Activated CD8-positive, alpha-beta T cell treated with anti-CD3 and anti-CD28 coated beads for 36 hours (primary cell): ENCODE measurements at regions of chr3 and their contacts with region 1.

Region 1: GRCh38 chr3:146110161-146110560 is 50.8 kb downstream of the PLOD2 start:
- DNase-seq: no peak
- ATAC-seq: no peak
- H3K4me3 Mint-ChIP-seq: no peak overlapping the region
- H3K27ac Mint-ChIP-seq: no peak overlapping the region
- H3K4me1 Mint-ChIP-seq: no peaks in the 10 kb centered on the region
- H3K27me3 Mint-ChIP-seq: no peaks in the 10 kb centered on the region
- CTCF ChIP-seq: no peak

Region 2: GRCh38 chr3:146125951-146126350 is 15.8 kb after region 1 on chr3:
- CTCF ChIA-PET with region 1: no interaction called
- POLR2A ChIA-PET with region 1: no interaction called
- intact Hi-C with region 1: no loop called
- DNase-seq: no peak
- ATAC-seq: no peak
- H3K4me3 Mint-ChIP-seq: no peak overlapping the region
- H3K27ac Mint-ChIP-seq: no peak overlapping the region
- H3K4me1 Mint-ChIP-seq: no peaks in the 10 kb centered on the region
- H3K27me3 Mint-ChIP-seq: no peaks in the 10 kb centered on the region
- CTCF ChIP-seq: no peak

Region 3: DNA sequence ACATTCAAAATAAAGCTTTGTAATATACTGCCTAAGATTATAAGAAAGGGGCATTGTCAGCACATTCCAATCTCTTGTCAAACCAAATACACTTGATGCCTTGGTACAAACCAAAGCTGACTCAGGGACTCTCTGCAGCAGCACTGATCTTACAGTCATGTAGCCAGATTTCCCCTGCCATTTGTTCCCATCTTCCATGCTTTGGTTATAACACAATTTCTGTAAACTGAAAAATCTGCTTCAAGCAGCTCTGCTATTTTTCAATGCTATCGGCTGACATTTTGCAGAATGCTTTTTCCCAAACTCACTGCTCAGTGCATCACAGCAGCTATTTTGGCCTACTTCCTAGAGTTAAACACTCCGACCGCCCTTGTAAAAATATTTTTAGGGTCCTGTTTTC is 32.6 kb after region 1 on chr3:
- CTCF ChIA-PET with region 1: no interaction called
- POLR2A ChIA-PET with region 1: no interaction called
- intact Hi-C with region 1: no loop called
- DNase-seq: no peak
- ATAC-seq: no peak
- H3K4me3 Mint-ChIP-seq: no peak overlapping the region
- H3K27ac Mint-ChIP-seq: no peak overlapping the region
- H3K4me1 Mint-ChIP-seq: no peaks in the 10 kb centered on the region
- H3K27me3 Mint-ChIP-seq: peaks cover 3% of the 10 kb centered on the region
- CTCF ChIP-seq: no peak

Region 4: GRCh38 chr3:146715170-146715569 is 605.0 kb after region 1 on chr3:
- CTCF ChIA-PET with region 1: no interaction called
- POLR2A ChIA-PET with region 1: no interaction called
- intact Hi-C with region 1: loop called (anchors 5 kb)
- DNase-seq: no peak
- ATAC-seq: no peak
- H3K4me3 Mint-ChIP-seq: no peak overlapping the region
- H3K27ac Mint-ChIP-seq: no peak overlapping the region
- H3K4me1 Mint-ChIP-seq: no peaks in the 10 kb centered on the region
- H3K27me3 Mint-ChIP-seq: no peaks in the 10 kb centered on the region
- CTCF ChIP-seq: no peak